Activated CD4-positive, alpha-beta memory T cell treated with anti-CD3 and anti-CD28 coated beads for 36 hours (primary cell): ENCODE measurements at regions of chr9 and their contacts with region 1.

Region 1: GRCh38 chr9:105069696-105070095 is 141.7 kb upstream of the ABCA1 start:
- DNase-seq: no peak
- H3K4me3 Mint-ChIP-seq: no peak overlapping the region
- H3K27ac Mint-ChIP-seq: no peak overlapping the region
- H3K4me1 Mint-ChIP-seq: peaks cover 7% of the 10 kb centered on the region
- H3K27me3 Mint-ChIP-seq: no peaks in the 10 kb centered on the region

Region 2: DNA sequence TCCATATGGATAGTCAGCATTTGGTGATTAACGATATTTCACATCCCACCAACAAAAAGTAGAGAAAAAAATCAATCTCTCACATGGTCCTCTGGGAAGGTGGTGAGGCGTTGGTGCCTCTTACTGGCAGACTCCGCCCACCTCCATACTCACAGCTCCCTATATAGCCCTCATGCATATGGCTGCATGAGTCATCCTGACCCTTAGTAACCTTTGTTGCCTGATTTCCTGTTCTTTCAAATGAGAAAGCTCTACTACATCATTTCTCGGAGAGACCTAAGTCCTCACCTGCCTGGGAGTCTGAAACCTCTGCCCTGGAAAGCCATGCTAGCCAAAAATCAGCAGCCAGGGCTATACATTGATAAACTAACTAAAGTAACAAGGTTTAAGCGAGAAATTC is 108.5 kb before region 1 on chr9:
- CTCF ChIA-PET with region 1: no interaction called
- POLR2A ChIA-PET with region 1: no interaction called
- intact Hi-C with region 1: no loop called
- DNase-seq: peak; percentile 83
- H3K4me3 Mint-ChIP-seq: no peak overlapping the region
- H3K27ac Mint-ChIP-seq: peak overlapping the region; percentile 85
- H3K4me1 Mint-ChIP-seq: peaks cover 31% of the 10 kb centered on the region
- H3K27me3 Mint-ChIP-seq: no peaks in the 10 kb centered on the region

Region 3: GRCh38 chr9:105007143-105007542 is 62.6 kb before region 1 on chr9:
- CTCF ChIA-PET with region 1: no interaction called
- POLR2A ChIA-PET with region 1: no interaction called
- intact Hi-C with region 1: no loop called
- DNase-seq: peak; percentile 41
- H3K4me3 Mint-ChIP-seq: no peak overlapping the region
- H3K27ac Mint-ChIP-seq: no peak overlapping the region
- H3K4me1 Mint-ChIP-seq: peaks cover 8% of the 10 kb centered on the region
- H3K27me3 Mint-ChIP-seq: peaks cover 1% of the 10 kb centered on the region

Region 4: DNA sequence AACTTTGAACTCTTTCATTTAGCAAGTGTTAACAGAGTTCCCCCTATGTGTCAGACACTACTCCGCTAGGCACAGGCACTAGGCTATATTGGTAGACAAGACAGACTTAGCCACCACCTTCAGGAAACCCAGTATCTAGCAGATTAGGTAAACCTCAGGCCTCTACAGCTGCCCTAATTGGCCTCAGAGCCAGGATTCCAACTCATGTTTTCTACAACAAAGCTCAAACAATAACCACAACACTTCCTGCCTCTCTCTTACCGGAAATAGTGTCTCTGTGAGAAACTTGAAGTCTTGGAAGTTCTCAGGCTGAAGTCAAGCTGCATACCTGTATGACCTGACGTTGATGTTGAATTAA is 58.1 kb after region 1 on chr9:
- CTCF ChIA-PET with region 1: no interaction called
- POLR2A ChIA-PET with region 1: no interaction called
- intact Hi-C with region 1: loop called (anchors 5 kb)
- DNase-seq: peak; percentile 62
- H3K4me3 Mint-ChIP-seq: no peak overlapping the region
- H3K27ac Mint-ChIP-seq: peak overlapping the region; percentile 60
- H3K4me1 Mint-ChIP-seq: peaks cover 38% of the 10 kb centered on the region
- H3K27me3 Mint-ChIP-seq: no peaks in the 10 kb centered on the region